CD4-positive, alpha-beta memory T cell (primary cell): ENCODE measurements at regions of chr3 and their contacts with region 1.

Region 1: DNA sequence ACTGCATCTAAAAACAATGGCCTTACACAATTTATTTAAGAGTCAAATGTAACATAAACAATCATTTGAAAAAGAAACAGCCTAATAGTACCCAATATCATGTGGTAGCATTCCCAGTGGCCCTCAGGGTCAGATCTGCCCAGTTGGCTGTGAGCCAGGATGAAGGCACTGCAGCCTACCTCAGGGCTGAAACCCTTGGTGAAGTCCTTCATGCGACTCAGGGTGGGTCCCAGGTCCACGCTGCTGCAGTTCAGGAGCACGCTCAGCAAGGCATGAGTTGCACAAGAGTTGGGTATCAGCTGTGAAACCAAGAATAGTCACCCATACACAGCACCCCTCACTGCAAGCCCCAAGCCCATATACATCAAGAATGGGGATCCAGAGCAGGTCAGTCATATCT is 37.1 kb downstream of the SEMA3G start:
- DNase-seq: peak in 1 of 5 donors; percentile 37
- H3K4me3 ChIP-seq: no peak overlapping the region
- H3K4me3 Mint-ChIP-seq: peak overlapping the region in 5 of 8 donors; percentile 23 to 96 (median 85)
- H3K27ac ChIP-seq: no peak overlapping the region
- H3K27ac Mint-ChIP-seq: peak overlapping the region in 5 of 7 donors; percentile 6 to 96 (median 93)
- H3K4me1 ChIP-seq: peaks cover 37% of the 10 kb centered on the region
- H3K4me1 Mint-ChIP-seq: peaks cover 27 to 44% (median 35%) of the 10 kb centered on the region in 4 donors
- H3K27me3 ChIP-seq: no peaks in the 10 kb centered on the region
- H3K27me3 Mint-ChIP-seq: no peaks in the 10 kb centered on the region

Region 2: DNA sequence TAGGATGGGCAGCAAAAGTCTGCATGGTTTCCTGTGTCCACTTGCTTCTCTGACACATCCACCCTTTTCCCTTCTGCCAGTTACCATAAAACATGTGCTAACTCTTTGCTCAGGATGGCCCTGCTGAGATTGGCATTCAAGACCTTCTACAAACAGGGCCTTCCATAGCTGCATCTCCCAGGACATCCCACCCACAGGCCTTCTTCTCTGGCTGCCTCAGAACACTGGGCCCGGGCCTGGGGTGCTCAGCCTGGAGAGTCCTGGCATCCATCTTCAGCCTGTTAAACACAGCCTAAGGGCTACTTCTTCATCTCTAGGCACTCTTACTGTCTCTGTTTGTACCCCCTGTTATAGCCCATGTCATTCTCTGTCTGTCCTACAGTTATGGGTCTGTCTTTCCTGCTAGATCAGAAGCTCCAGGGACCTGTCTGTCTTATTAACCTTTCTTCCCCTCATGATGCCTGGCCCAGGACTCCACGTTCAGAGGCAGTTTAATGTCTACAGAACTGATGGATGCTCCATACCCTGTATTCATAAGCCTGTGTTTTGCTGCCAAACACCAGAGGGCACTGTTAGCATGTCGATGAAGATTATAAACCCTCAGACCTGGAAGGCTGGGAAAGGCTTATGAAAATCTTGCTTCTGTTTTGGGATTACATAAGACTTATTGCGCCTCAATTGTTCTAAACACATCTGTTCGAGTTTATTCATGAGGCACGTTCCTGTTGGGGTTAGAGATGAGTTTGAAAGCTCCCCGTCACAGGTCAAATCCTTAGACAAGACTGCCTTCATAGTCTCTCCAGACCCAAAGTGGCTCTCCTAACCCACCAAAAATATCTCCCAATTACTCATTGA is 20.6 kb after region 1 on chr3:
- CTCF ChIA-PET with region 1: interaction called, 19 read pairs
- POLR2A ChIA-PET with region 1: no interaction called
- intact Hi-C with region 1: no loop called
- DNase-seq: peak; percentile 25 to 39 (median 36)
- H3K4me3 ChIP-seq: no peak overlapping the region
- H3K4me3 Mint-ChIP-seq: no peak overlapping the region
- H3K27ac ChIP-seq: no peak overlapping the region
- H3K27ac Mint-ChIP-seq: peak overlapping the region in 1 of 7 donors; percentile 54
- H3K4me1 ChIP-seq: peaks cover 13% of the 10 kb centered on the region
- H3K4me1 Mint-ChIP-seq: peaks cover 4 to 14% (median 5%) of the 10 kb centered on the region in 4 donors
- H3K27me3 ChIP-seq: no peaks in the 10 kb centered on the region
- H3K27me3 Mint-ChIP-seq: no peaks in the 10 kb centered on the region

Region 3: GRCh38 chr3:52455283-52456168 is 47.7 kb after region 1 on chr3 and contains the start of gene NISCH:
- CTCF ChIA-PET with region 1: interaction called, 107 read pairs
- POLR2A ChIA-PET with region 1: interaction called, 6 read pairs
- intact Hi-C with region 1: no loop called
- DNase-seq: peak; percentile 93 to 98 (median 96)
- H3K4me3 ChIP-seq: peak within 1 kb of the TSS; percentile 91 to 97
- H3K4me3 Mint-ChIP-seq: peak within 1 kb of the TSS; percentile 91 to 97 (median 94)
- H3K27ac ChIP-seq: peak within 1 kb of the TSS; percentile 93
- H3K27ac Mint-ChIP-seq: peak within 1 kb of the TSS; percentile 97 to 99 (median 99)
- H3K4me1 ChIP-seq: peaks cover 36% of the 10 kb centered on the region
- H3K4me1 Mint-ChIP-seq: peaks cover 25 to 60% (median 35%) of the 10 kb centered on the region in 4 donors
- H3K27me3 ChIP-seq: no peaks in the 10 kb centered on the region
- H3K27me3 Mint-ChIP-seq: no peaks in the 10 kb centered on the region
- total RNA-seq, gene NISCH: 189 to 205 TPM